Activated CD4-positive, alpha-beta memory T cell treated with anti-CD3 and anti-CD28 coated beads for 36 hours (primary cell): ENCODE measurements at regions of chr11 and their contacts with region 1.

Region 1: GRCh38 chr11:32583459-32584271 is at the start of gene EIF3M:
- DNase-seq: peak; percentile 97
- H3K4me3 Mint-ChIP-seq: peak within 1 kb of the TSS; percentile 97
- H3K27ac Mint-ChIP-seq: peak within 1 kb of the TSS; percentile 98
- H3K4me1 Mint-ChIP-seq: peaks cover 38% of the 10 kb centered on the region
- H3K27me3 Mint-ChIP-seq: peaks cover 1% of the 10 kb centered on the region
- total RNA-seq, gene EIF3M: 377 to 389 TPM

Region 2: GRCh38 chr11:31810779-31811647 is 772.7 kb before region 1 on chr11 and contains the start of gene PAX6:
- CTCF ChIA-PET with region 1: no interaction called
- POLR2A ChIA-PET with region 1: no interaction called
- intact Hi-C with region 1: loop called (anchors 10 kb)
- DNase-seq: peak; percentile 69
- H3K4me3 Mint-ChIP-seq: peak within 1 kb of the TSS; percentile 66
- H3K27ac Mint-ChIP-seq: no peak within 1 kb of the TSS
- H3K4me1 Mint-ChIP-seq: peaks cover 41% of the 10 kb centered on the region
- H3K27me3 Mint-ChIP-seq: peaks cover 74% of the 10 kb centered on the region
- total RNA-seq, gene PAX6: not detected

Region 3: GRCh38 chr11:32188785-32189184 is 394.9 kb before region 1 on chr11:
- CTCF ChIA-PET with region 1: no interaction called
- POLR2A ChIA-PET with region 1: no interaction called
- intact Hi-C with region 1: no loop called
- DNase-seq: no peak
- H3K4me3 Mint-ChIP-seq: no peak overlapping the region
- H3K27ac Mint-ChIP-seq: no peak overlapping the region
- H3K4me1 Mint-ChIP-seq: no peaks in the 10 kb centered on the region
- H3K27me3 Mint-ChIP-seq: peaks cover 15% of the 10 kb centered on the region

Region 4: DNA sequence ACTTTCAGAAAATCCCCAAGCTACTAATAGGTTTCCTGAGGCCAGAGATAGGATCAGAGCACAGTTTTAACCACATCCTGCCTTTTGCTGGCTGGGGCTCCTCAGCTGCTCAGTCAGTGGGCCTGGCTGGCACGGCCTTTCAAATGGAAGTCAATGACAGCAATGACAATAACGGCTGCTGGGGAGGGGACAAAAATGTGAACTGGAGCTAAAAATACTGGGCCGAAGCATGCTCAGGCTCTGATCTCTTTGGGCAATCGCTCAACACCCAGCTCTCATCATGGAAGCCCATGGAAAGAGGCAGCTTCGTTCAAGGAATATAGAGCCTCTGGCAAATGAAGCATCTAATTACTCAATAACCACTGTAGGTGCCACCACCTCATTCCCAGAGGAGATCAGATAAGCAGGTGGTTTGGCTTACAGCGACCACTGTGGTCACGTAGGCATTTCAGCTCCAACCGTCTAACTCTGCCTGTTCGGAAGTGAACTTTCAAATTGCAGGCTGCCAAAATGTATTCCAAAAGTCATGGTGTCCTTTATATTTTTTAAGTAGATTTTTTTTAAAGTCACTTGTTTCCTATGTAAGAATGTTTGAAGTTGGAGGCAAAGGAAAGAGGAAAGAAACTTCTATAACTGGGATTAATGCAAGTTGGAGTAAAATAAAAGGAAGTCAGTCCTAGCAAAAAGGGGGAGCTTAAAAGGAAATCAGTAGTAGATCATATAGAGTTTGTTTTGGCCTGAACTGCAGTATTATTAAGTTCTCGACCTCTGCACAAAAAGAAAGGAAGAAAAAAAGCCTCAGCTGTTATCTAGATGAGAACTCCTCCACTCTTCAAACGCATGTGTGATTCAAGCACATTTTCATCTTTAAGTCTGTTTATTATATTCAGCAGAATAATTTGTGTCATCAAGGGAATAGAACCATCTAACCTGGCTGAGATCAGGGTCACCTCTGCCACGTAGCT is 162.4 kb before region 1 on chr11:
- CTCF ChIA-PET with region 1: no interaction called
- POLR2A ChIA-PET with region 1: no interaction called
- intact Hi-C with region 1: loop called (anchors 5 kb)
- DNase-seq: peak; percentile 54
- H3K4me3 Mint-ChIP-seq: no peak overlapping the region
- H3K27ac Mint-ChIP-seq: no peak overlapping the region
- H3K4me1 Mint-ChIP-seq: peaks cover 14% of the 10 kb centered on the region
- H3K27me3 Mint-ChIP-seq: peaks cover 26% of the 10 kb centered on the region

Region 5: GRCh38 chr11:32602657-32603415 is 19.2 kb after region 1 on chr11:
- CTCF ChIA-PET with region 1: interaction called, 4 read pairs
- POLR2A ChIA-PET with region 1: interaction called, 3 read pairs
- intact Hi-C with region 1: loop called (anchors 2 kb)
- DNase-seq: no peak
- H3K4me3 Mint-ChIP-seq: no peak overlapping the region
- H3K27ac Mint-ChIP-seq: peak overlapping the region; percentile 39
- H3K4me1 Mint-ChIP-seq: peaks cover 8% of the 10 kb centered on the region
- H3K27me3 Mint-ChIP-seq: no peaks in the 10 kb centered on the region

Region 6: GRCh38 chr11:32829680-32830412 is 246.2 kb after region 1 on chr11 and contains the start of gene PRRG4:
- CTCF ChIA-PET with region 1: no interaction called
- POLR2A ChIA-PET with region 1: no interaction called
- intact Hi-C with region 1: loop called (anchors 10 kb)
- DNase-seq: peak; percentile 67
- H3K4me3 Mint-ChIP-seq: peak within 1 kb of the TSS; percentile 83
- H3K27ac Mint-ChIP-seq: no peak within 1 kb of the TSS
- H3K4me1 Mint-ChIP-seq: peaks cover 12% of the 10 kb centered on the region
- H3K27me3 Mint-ChIP-seq: peaks cover 22% of the 10 kb centered on the region
- total RNA-seq, gene PRRG4: 0.24 to 0.43 TPM

Region 7: DNA sequence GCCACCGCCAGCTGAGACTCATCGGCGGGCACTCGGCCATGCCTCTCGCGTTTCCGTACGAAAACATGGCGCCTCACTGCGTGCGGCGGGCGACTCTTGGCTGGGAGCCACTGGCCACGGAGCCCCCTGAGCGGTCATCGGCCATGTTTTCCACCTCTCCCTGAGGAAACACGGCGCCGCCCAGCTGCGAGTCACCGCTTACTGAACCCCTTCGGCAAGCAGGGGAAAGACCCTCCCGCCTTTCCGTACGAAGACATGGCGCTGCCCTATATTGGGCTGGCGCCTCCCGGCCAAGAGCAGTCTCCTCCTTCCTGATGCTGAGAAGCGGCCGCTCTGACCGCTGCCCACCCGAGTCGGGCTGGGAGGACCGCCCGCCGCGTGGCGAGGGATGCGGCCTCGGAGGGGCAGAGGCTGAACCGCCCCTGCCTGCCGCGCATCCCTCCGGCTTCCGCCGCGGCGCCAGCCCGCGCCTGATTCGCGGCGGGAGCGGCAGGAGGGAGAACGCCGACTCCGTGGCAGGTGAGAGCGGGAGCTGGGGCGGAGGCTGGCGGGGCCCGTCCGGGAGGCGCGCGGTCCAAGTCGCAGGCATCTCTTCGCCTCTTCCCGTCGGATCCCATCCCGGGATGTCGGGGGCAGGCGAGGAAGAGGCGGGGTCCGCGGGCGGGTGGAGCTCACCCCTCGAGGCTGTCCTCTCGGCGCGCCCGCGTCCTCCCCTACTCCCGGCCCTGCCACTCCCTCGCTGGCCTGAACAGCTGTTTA is 455.8 kb after region 1 on chr11 and contains the start of gene TCP11L1:
- CTCF ChIA-PET with region 1: no interaction called
- POLR2A ChIA-PET with region 1: interaction called, 4 read pairs
- intact Hi-C with region 1: loop called (anchors 1 kb)
- DNase-seq: peak; percentile 89
- H3K4me3 Mint-ChIP-seq: peak within 1 kb of the TSS; percentile 87
- H3K27ac Mint-ChIP-seq: peak within 1 kb of the TSS; percentile 92
- H3K4me1 Mint-ChIP-seq: peaks cover 37% of the 10 kb centered on the region
- H3K27me3 Mint-ChIP-seq: peaks cover 10% of the 10 kb centered on the region
- total RNA-seq, gene TCP11L1: 10.0 to 11.4 TPM

Region 8: DNA sequence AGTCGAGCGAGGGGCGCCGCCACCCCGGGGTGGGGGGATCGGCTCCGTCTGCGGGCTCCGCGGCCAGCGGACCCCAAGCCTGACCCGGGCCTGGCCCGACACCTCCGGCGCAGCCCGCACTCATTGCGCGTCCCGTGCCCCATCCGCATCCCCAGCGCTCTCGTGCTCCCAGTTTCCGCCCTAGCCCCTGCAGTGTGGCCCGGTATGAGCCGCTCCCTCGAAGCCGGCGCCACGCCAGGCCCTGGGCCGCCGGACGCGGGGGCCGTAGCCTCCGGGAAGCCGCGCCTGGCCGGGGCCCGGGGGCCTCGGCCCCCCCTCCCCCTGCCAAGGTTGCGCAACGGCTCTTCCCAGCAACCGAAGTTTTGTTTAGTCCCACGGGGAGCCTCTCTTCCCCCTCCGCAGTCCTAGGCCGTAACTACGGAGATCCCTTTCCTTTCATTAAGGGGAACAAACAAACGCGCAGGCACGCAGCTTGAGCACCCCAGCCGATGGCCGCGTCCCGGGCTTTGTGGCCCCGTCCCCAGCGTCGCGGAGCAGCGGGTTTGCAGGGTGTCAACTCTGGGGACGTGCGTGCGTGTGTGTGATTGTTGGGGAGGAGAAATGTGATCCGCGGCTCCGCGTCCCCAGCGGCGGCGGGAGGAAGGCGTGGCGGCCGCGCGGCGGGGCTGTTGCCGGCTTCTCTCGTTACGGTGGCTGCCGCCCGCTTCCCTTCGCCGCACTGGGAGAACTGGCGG is 674.4 kb after region 1 on chr11:
- CTCF ChIA-PET with region 1: no interaction called
- POLR2A ChIA-PET with region 1: no interaction called
- intact Hi-C with region 1: loop called (anchors 10 kb)
- DNase-seq: peak; percentile 84
- H3K4me3 Mint-ChIP-seq: peak overlapping the region; percentile 94
- H3K27ac Mint-ChIP-seq: peak overlapping the region; percentile 95
- H3K4me1 Mint-ChIP-seq: peaks cover 42% of the 10 kb centered on the region
- H3K27me3 Mint-ChIP-seq: no peaks in the 10 kb centered on the region